PC-3 (cell line): ENCODE measurements at regions of chr17 and their contacts with region 1.

Region 1: DNA sequence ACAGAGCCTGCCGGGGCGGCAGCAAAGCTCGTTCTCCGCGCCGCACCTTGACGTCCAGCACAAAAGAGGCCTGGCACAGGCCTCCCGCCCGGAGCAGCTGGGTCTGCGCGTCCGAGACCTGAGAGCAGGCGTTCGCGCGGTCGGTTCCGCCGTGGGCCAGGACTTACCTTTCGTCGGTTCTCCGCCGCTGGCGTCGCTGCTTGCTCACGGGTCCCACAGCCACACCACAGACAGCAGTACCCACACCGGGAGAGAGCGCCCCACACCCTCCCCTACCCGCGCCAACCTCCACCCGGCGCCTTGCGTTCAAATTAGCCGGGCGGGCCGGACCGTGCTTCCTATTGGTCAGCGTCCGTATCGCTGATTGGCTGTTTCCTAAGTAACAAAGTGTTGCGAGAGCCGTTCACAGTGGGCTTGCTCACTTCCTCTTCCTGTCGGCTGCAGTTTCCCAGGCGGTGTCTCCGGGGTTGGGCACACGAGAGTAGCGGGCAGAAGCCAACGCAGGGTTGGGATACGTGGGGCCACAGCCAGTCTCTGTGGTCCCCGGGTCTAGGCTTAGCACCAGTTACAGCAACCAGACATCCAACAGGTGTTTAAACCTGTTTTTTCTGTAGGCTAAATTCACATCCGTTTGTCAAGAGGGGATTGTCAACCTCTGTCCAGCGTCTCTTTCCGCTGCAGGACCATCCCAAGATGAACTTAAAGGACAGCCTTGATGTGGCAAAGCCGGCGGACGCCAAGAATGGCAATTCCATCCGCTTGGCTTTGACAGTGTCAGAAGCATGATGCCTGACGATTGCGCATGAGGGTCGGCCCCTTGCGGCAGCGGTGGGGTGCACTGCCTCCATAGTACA is at the start of gene KIF18B:
- DNase-seq: peak; percentile 99
- ATAC-seq: peak; percentile 97
- H3K4me3 ChIP-seq: peak within 1 kb of the TSS; percentile 87
- H3K27ac ChIP-seq: peak within 1 kb of the TSS; percentile 72
- H3K4me1 ChIP-seq: peaks cover 36% of the 10 kb centered on the region
- H3K27me3 ChIP-seq: no peaks in the 10 kb centered on the region
- CTCF ChIP-seq: peak; percentile 37; the same call in 1 of the 2 replicates
- total RNA-seq, gene KIF18B: 25.0 and 28.5 TPM in 2 replicates

Region 2: GRCh38 chr17:44887971-44888954 is 59.4 kb before region 1 on chr17:
- CTCF ChIA-PET with region 1: no interaction called
- POLR2A ChIA-PET with region 1: interaction called, 19 read pairs
- intact Hi-C with region 1: no loop called
- DNase-seq: no peak
- ATAC-seq: no peak
- H3K4me3 ChIP-seq: no peak overlapping the region
- H3K27ac ChIP-seq: no peak overlapping the region
- H3K4me1 ChIP-seq: no peaks in the 10 kb centered on the region
- H3K27me3 ChIP-seq: no peaks in the 10 kb centered on the region
- CTCF ChIP-seq: no peak

Region 3: GRCh38 chr17:45051060-45051719 is 103.5 kb after region 1 on chr17 and contains the start of gene DCAKD:
- CTCF ChIA-PET with region 1: no interaction called
- POLR2A ChIA-PET with region 1: no interaction called
- intact Hi-C with region 1: loop called (anchors 1 kb)
- DNase-seq: peak; percentile 99
- ATAC-seq: peak; percentile 98
- H3K4me3 ChIP-seq: peak within 1 kb of the TSS; percentile 84
- H3K27ac ChIP-seq: peak within 1 kb of the TSS; percentile 92
- H3K4me1 ChIP-seq: peaks cover 36% of the 10 kb centered on the region
- H3K27me3 ChIP-seq: no peaks in the 10 kb centered on the region
- CTCF ChIP-seq: no peak
- total RNA-seq, gene DCAKD: 56.2 and 59.5 TPM in 2 replicates